Activated B cell treated with CpG ODN at 0.5 μM for 24 hours (primary cell): ENCODE measurements at regions of chr15 and their contacts with region 1.

Region 1: DNA sequence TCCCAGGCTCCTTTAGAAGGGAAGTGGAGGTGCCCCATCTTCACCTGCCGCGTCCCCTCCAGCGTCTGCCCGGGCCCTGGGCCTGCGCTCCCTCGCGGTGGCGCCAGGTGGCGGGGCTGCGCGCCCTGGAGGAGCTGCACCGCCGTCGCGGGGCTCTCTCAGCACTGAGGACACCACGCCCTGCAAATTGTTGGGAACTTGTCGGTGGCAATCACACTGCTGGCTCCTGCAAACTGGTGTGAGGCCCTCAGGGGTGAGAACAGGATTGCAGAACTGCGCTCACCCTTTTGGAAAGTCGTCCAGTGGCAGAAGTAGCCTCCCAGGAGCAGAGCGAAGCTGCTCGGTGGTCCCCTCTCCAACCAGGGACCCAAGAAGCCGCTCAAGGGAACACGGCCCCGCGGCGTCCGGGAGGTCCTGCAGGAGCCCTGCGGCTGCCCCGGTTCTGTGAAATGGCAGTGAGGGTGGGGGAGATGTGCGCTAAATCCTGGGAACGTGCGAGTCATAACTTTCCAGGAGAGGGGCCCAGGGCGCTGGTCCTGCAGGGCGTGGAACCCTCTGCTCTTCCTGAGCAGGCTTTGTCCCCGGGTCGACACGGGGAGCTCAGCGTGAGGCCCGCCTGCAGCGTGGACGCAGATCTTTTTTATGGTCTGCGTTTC is 995 bp upstream of the LRRK1 start:
- DNase-seq: peak; percentile 81
- ATAC-seq: peak; percentile 79
- H3K4me3 Mint-ChIP-seq: peak overlapping the region; percentile 89
- H3K27ac Mint-ChIP-seq: peak overlapping the region; percentile 81
- H3K4me1 Mint-ChIP-seq: peaks cover 44% of the 10 kb centered on the region
- H3K27me3 Mint-ChIP-seq: no peaks in the 10 kb centered on the region
- CTCF ChIP-seq: peak; percentile 57

Region 2: DNA sequence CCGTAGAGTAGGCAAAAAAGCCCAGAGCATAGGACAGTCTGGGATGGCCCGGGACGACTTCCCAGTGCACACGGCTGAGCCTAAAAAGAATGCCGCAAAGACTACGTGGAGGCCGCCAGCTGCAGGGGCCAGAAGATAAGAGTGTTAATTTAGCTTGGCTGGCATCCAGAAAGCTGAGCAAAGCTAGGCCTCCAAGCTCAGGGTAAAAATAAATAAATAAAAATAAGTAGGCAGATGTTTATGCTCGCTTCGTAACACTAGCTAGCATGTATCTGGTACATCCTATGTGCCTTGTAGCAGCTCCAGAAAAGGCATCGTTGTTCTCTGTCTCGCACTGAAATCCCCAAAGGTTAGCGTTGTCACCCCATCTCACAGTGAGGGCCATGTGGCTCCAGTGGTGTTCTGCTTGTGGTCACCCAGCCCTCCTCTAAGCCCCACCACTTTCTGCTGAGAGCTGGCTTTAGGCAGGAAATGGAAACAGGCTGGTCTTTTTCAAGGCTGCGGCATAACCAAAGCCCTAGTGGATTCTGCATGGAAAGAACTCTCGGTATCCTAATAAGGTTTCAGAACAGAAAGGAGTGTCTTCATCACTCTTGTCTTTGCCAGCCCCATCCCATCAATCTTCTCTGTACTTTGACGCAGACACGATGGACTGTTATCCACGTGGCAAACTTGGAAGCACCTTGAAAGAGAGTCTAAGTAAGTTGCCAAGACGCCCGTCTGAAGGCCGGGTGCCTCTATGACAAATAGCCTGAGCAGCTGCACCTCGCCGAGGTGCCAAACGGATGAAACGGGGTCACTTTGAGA is 1410.5 kb before region 1 on chr15:
- CTCF ChIA-PET with region 1: no interaction called
- POLR2A ChIA-PET with region 1: no interaction called
- intact Hi-C with region 1: loop called (anchors 10 kb)
- DNase-seq: no peak
- ATAC-seq: no peak
- H3K4me3 Mint-ChIP-seq: peak overlapping the region; percentile 50
- H3K27ac Mint-ChIP-seq: peak overlapping the region; percentile 97
- H3K4me1 Mint-ChIP-seq: peaks cover 96% of the 10 kb centered on the region
- H3K27me3 Mint-ChIP-seq: no peaks in the 10 kb centered on the region
- CTCF ChIP-seq: no peak

Region 3: GRCh38 chr15:100694381-100695021 is 223.7 kb before region 1 on chr15:
- CTCF ChIA-PET with region 1: no interaction called
- POLR2A ChIA-PET with region 1: no interaction called
- intact Hi-C with region 1: no loop called
- DNase-seq: no peak
- ATAC-seq: no peak
- H3K4me3 Mint-ChIP-seq: no peak overlapping the region
- H3K27ac Mint-ChIP-seq: no peak overlapping the region
- H3K4me1 Mint-ChIP-seq: no peaks in the 10 kb centered on the region
- H3K27me3 Mint-ChIP-seq: peaks cover 8% of the 10 kb centered on the region
- CTCF ChIP-seq: no peak

Region 4: GRCh38 chr15:100929641-100930042 is 11.5 kb after region 1 on chr15:
- CTCF ChIA-PET with region 1: interaction called, 31 read pairs
- POLR2A ChIA-PET with region 1: interaction called, 8 read pairs
- intact Hi-C with region 1: loop called (anchors 1 kb)
- DNase-seq: no peak
- ATAC-seq: no peak
- H3K4me3 Mint-ChIP-seq: no peak overlapping the region
- H3K27ac Mint-ChIP-seq: no peak overlapping the region
- H3K4me1 Mint-ChIP-seq: peaks cover 74% of the 10 kb centered on the region
- H3K27me3 Mint-ChIP-seq: no peaks in the 10 kb centered on the region
- CTCF ChIP-seq: no peak

Region 5: DNA sequence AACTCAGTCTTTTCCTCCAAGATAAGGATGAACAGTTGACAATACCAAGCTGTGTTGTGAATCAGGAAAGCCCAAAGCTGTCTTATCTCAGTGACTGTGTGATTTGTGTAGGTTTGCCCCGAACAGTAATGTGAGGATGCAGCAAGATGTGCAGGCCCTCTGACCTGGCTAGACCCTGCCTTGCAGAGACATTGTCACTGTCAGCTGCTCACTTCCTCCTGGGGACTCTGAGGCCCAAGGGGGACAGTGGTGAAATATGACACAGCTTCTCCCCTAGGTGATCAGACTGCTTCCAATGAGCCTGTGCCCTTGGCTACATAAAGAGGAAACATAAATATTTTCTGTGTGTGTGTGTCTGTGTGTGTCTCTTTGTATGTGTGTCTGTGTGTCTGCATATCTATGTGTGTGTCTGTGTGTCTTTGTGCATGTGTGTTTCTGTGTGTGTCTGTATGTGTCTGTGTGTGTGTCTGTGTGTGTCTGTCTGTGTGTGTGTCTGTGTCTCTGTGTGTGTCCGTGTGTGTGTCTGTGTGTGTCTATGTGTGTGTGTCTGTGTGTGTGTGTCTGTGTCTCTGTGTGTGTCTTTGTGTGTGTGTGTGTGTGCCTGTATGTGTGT is 22.7 kb after region 1 on chr15:
- CTCF ChIA-PET with region 1: interaction called, 11 read pairs
- POLR2A ChIA-PET with region 1: interaction called, 13 read pairs
- intact Hi-C with region 1: loop called (anchors 1 kb)
- DNase-seq: no peak
- ATAC-seq: peak; percentile 87
- H3K4me3 Mint-ChIP-seq: no peak overlapping the region
- H3K27ac Mint-ChIP-seq: no peak overlapping the region
- H3K4me1 Mint-ChIP-seq: peaks cover 25% of the 10 kb centered on the region
- H3K27me3 Mint-ChIP-seq: no peaks in the 10 kb centered on the region
- CTCF ChIP-seq: no peak

Region 6: DNA sequence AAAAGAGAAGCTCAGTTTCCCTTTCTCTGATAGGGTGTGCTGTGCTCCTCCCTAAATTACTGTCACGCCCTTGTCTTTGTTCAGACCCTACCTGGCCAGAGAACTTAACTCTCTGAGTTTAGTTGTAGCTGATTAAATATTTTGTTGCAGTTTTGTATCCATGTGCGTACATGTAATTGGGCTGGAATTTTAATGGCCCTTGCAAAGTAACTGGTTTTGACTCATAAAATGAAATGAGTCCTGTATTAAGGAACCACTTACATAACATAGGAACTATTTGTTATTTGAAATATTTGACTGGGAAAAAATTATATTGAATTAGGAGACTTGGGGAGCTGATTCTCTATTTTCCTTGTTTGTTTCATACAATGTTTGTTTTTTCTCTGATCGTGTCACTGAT is 81.2 kb after region 1 on chr15:
- CTCF ChIA-PET with region 1: interaction called, 543 read pairs
- POLR2A ChIA-PET with region 1: interaction called, 4 read pairs
- intact Hi-C with region 1: no loop called
- DNase-seq: no peak
- ATAC-seq: no peak
- H3K4me3 Mint-ChIP-seq: no peak overlapping the region
- H3K27ac Mint-ChIP-seq: no peak overlapping the region
- H3K4me1 Mint-ChIP-seq: peaks cover 18% of the 10 kb centered on the region
- H3K27me3 Mint-ChIP-seq: no peaks in the 10 kb centered on the region
- CTCF ChIP-seq: no peak

Region 7: DNA sequence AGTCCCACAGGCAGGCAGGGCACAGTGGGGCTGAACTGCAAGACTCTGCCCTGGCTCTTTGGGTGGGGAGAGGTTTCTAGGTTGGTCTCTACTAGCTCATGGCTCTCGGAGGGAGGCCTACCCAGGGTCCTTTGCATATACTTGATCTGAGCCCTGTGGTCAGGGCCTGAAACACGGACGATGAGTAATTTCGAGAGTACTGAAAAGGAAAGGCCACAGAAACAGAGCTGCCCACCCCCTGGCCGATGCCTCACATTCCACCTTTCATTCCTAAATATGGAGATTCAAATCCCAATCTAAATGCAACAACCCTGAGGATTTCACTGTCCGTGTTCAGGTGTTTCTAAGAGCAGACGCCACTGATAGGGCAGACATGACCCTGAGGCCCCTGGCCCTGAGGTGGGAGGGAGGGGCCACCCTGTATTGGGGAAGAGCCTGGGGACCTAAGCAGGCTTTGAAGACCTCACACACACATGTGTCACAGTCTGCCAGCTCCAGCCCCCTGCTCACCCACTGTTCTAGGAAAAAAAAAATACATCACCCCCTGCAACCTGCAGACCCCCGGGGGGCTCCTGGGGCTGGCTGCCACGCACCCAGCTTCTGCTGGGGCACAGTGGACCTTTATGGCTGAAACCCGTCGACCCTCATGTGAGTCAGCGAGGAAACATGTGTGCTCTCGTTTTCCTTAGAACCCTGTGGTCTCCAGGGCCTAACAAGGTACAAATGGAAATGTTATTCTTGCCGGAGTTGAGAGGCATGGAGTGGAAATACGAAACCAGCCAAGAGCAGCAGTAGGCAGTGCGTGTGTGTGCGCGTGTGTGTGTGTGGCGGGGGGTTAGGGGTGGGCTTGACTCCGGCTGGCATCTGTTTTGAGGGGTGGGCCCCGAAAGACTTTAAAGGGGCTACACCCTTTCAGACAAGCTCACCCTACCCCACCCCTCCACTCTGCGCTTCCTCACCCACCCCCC is 221.0 kb after region 1 on chr15:
- CTCF ChIA-PET with region 1: no interaction called
- POLR2A ChIA-PET with region 1: no interaction called
- intact Hi-C with region 1: loop called (anchors 10 kb)
- DNase-seq: no peak
- ATAC-seq: no peak
- H3K4me3 Mint-ChIP-seq: no peak overlapping the region
- H3K27ac Mint-ChIP-seq: no peak overlapping the region
- H3K4me1 Mint-ChIP-seq: peaks cover 52% of the 10 kb centered on the region
- H3K27me3 Mint-ChIP-seq: no peaks in the 10 kb centered on the region
- CTCF ChIP-seq: no peak

Region 8: GRCh38 chr15:101294731-101295606 is 376.8 kb after region 1 on chr15 and contains the start of gene SNRPA1:
- CTCF ChIA-PET with region 1: no interaction called
- POLR2A ChIA-PET with region 1: interaction called, 3 read pairs
- intact Hi-C with region 1: loop called (anchors 2 kb)
- DNase-seq: peak; percentile 99
- ATAC-seq: peak; percentile 83
- H3K4me3 Mint-ChIP-seq: peak within 1 kb of the TSS; percentile 97
- H3K27ac Mint-ChIP-seq: peak within 1 kb of the TSS; percentile 95
- H3K4me1 Mint-ChIP-seq: peaks cover 45% of the 10 kb centered on the region
- H3K27me3 Mint-ChIP-seq: no peaks in the 10 kb centered on the region
- CTCF ChIP-seq: no peak
- total RNA-seq, gene SNRPA1: 119 and 122 TPM in 2 replicates